GM10248 (cell line): ENCODE measurements at regions of chr12 and their contacts with region 1.

Region 1: GRCh38 chr12:19186722-19187661 is 57.5 kb downstream of the PLEKHA5 start:
- DNase-seq: peak; percentile 18
- CTCF ChIP-seq: peak; percentile 28

Region 2: DNA sequence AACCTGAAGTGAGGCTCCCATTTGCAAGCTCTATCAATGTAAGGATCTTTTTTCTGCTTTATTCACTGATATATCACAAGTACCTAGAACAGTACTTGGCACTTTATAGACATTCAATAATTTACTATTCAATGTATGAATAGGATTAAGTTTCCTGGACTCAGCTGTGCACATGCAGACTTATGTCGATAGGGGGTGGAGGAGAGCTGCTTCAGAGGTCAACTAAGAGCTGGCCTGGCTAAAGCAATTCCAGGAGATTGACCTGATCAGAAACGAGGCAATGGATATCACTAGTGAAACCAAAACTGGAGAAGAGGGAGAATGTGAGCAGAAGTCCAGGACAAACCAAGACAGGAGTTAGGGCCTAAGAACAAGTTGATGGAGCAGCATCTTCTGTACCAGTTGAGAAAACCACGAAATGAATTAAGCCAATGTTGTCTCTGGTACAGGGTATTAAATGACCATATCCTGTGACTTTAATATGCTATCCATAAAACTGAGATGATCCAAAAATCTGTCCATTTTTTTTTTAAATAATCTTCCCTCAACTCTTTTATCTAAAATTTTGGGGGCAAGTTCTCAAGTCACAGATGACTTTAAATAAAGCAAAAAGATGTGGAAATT is 756.5 kb before region 1 on chr12:
- CTCF ChIA-PET with region 1: interaction called, 22 read pairs
- POLR2A ChIA-PET with region 1: no interaction called
- DNase-seq: peak; percentile 13
- CTCF ChIP-seq: peak; percentile 76

Region 3: DNA sequence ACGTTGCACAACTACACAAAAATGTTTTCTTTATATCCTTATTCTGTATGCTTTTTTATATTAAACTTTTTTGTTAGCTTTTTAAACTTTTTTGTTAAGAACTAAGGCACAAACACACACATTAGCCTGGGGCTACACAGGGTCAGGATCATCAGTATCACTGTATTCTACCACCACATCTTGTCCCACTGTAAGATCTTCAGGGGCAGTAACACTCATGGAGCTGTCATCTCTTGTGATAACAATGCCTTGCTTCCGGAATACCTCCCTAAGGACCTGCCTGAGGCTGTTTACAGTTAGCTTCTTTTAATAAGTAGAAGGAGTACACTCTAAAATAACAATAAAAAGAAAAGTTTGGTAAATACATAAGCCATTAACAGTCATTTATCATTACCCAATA is 15.3 kb before region 1 on chr12:
- CTCF ChIA-PET with region 1: interaction called, 10 read pairs
- POLR2A ChIA-PET with region 1: no interaction called
- DNase-seq: no peak
- CTCF ChIP-seq: no peak